ENCODE measurements at regions of chr14 and their contacts with region 1.

Region 1: DNA sequence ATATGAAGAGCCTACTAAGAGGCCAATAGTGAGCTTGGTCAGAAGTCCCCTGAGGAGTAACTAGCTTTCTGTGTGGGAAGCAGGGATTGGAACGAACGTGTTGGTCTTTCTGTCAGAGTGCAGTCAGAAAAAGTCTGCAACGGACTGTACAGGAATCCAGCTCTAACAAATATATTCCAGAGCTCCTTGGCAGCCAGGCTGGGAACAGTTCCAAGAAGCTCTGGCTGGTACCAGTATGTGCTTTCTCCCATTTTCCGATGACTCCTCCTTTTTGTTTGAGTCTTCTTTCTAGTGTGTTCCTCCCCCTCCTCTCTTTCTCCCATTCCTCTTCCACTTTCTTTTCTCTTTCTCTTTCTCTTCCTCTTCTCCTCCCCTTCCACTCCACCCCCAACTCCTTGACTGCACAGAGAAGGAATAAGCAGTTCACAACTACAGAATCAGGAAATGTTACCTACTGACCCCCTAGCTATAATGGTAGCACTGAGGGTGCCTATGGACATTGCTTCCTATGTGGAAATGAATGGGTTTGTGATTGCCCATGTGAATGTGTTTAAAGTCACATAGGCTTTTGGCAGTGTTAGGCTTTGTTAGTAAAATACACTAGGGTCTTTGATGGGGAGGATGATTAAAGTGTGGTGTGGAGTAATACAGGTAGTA is 59.9 kb downstream of the TTLL5 start:
- DNase-seq: no peak
- ATAC-seq: no peak
- H3K4me3 ChIP-seq: no peak overlapping the region
- H3K27ac ChIP-seq: no peak overlapping the region
- H3K4me1 ChIP-seq: no peaks in the 10 kb centered on the region
- H3K27me3 ChIP-seq: no peaks in the 10 kb centered on the region
- CTCF ChIP-seq: no peak

Region 2: GRCh38 chr14:75591331-75591946 is 129.5 kb before region 1 on chr14:
- CTCF ChIA-PET with region 1: no interaction called
- POLR2A ChIA-PET with region 1: no interaction called
- in situ Hi-C with region 1: no loop called
- intact Hi-C with region 1: no loop called
- DNase-seq: no peak
- ATAC-seq: no peak
- H3K4me3 ChIP-seq: no peak overlapping the region
- H3K27ac ChIP-seq: no peak overlapping the region
- H3K4me1 ChIP-seq: no peaks in the 10 kb centered on the region
- H3K27me3 ChIP-seq: no peaks in the 10 kb centered on the region
- CTCF ChIP-seq: no peak

Region 3: GRCh38 chr14:75794615-75795038 is 73.7 kb after region 1 on chr14:
- CTCF ChIA-PET with region 1: interaction called, 3 read pairs
- POLR2A ChIA-PET with region 1: no interaction called
- in situ Hi-C with region 1: no loop called
- intact Hi-C with region 1: loop called (anchors 5 kb)
- DNase-seq: peak; percentile 8
- ATAC-seq: peak; percentile 86
- H3K4me3 ChIP-seq: no peak overlapping the region
- H3K27ac ChIP-seq: no peak overlapping the region
- H3K4me1 ChIP-seq: no peaks in the 10 kb centered on the region
- H3K27me3 ChIP-seq: no peaks in the 10 kb centered on the region
- CTCF ChIP-seq: peak; percentile 27

Region 4: DNA sequence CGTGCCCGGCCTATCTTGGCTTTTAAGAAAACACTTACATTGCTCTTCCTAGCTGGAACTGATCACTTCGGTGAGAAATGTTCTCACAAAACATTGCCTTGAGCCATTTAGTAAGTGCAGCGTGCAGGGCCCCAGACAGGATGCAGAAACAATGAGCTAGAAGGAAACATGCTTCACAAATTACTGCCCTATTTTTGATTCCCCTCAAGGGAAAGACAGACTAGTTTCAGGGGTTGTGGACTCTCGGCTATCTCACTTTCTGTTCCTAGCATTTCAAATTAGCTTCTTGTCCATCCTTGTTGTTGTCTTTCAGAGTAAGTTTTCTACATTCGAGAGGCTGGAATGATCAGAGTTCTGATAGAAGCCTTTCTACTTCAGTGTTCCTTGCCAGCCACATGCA is 239.3 kb after region 1 on chr14:
- CTCF ChIA-PET with region 1: no interaction called
- POLR2A ChIA-PET with region 1: no interaction called
- in situ Hi-C with region 1: no loop called
- intact Hi-C with region 1: no loop called
- DNase-seq: no peak
- ATAC-seq: no peak
- H3K4me3 ChIP-seq: no peak overlapping the region
- H3K27ac ChIP-seq: no peak overlapping the region
- H3K4me1 ChIP-seq: no peaks in the 10 kb centered on the region
- H3K27me3 ChIP-seq: no peaks in the 10 kb centered on the region
- CTCF ChIP-seq: no peak